Activated naive CD4-positive, alpha-beta T cell treated with anti-CD3 and anti-CD28 coated beads for 36 hours (primary cell): ENCODE measurements at regions of chr3 and their contacts with region 1.

Region 1: GRCh38 chr3:28476194-28476593 is 127.6 kb upstream of the AZI2 start:
- DNase-seq: no peak
- H3K4me3 Mint-ChIP-seq: no peak overlapping the region
- H3K27ac Mint-ChIP-seq: no peak overlapping the region
- H3K4me1 Mint-ChIP-seq: no peaks in the 10 kb centered on the region
- H3K27me3 Mint-ChIP-seq: no peaks in the 10 kb centered on the region

Region 2: DNA sequence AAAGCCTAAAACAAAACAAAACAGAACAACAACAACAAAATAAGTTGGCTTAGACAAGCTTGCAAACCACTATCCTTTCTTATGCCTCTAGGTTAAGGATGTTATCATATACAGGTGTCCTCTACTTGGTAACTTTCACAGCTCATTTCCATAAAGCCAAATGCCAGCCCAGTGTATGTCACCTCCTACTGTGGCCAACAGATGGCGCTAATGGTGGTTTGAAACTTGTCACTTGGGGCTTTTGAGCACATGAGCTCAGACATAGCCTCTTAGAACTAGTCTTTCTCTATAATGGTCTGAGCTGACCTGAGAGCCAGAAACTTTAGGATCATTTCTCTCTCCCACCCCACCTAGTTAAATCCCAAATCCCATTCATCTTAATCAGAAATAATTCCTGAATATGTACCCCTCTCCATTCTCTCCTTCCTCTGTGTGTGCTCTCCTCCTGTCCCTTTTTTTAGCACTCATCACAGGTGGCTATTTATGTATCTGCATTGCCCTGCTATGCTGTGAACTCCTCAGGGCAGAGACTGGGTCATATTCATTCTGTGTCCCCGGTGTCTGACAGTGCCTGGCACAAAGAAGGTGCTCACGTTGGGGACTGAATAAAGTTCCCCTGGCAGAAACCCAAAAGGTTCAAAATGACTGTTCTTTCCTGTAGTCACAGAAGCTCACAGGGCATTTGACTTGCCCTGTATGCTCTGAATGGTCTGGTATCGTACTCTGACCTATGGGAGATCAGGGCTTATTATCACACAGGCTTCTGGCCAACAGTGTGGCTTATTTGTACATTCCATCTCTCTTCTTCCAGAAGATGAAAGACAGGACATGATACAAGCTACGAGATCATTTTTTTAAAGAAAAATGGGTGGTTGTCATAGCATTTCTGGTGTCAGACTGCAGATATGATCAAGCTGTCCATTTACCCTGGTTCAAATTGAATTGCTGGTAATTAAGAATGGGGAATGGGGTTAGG is 191.7 kb after region 1 on chr3:
- CTCF ChIA-PET with region 1: interaction called, 5 read pairs
- intact Hi-C with region 1: loop called (anchors 2 kb)
- DNase-seq: peak; percentile 69
- H3K4me3 Mint-ChIP-seq: no peak overlapping the region
- H3K27ac Mint-ChIP-seq: no peak overlapping the region
- H3K4me1 Mint-ChIP-seq: peaks cover 3% of the 10 kb centered on the region
- H3K27me3 Mint-ChIP-seq: peaks cover 6% of the 10 kb centered on the region

Region 3: GRCh38 chr3:28726840-28727239 is 250.6 kb after region 1 on chr3:
- CTCF ChIA-PET with region 1: no interaction called
- intact Hi-C with region 1: loop called (anchors 2 kb)
- DNase-seq: peak; percentile 15
- H3K4me3 Mint-ChIP-seq: no peak overlapping the region
- H3K27ac Mint-ChIP-seq: no peak overlapping the region
- H3K4me1 Mint-ChIP-seq: no peaks in the 10 kb centered on the region
- H3K27me3 Mint-ChIP-seq: peaks cover 3% of the 10 kb centered on the region

Region 4: DNA sequence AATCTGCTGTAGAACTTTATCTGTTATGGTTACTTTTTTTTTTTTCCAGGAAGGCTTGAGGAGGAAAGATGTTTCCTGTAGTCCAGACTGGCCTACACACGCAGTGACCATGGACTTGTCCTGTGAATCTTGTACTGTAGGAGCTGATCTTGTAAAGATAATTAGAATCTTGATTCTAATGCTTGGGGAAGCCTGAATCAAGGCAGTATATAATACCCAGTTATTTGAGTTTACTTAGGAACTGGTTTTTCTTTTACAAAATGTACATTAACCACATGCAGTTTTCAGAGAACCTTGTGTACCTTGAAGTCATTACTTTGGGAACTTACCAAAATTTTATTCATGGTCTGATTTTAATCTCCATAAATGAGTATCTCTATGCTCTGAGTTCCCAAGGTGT is 312.3 kb after region 1 on chr3:
- CTCF ChIA-PET with region 1: no interaction called
- intact Hi-C with region 1: no loop called
- DNase-seq: no peak
- H3K4me3 Mint-ChIP-seq: no peak overlapping the region
- H3K27ac Mint-ChIP-seq: no peak overlapping the region
- H3K4me1 Mint-ChIP-seq: no peaks in the 10 kb centered on the region
- H3K27me3 Mint-ChIP-seq: no peaks in the 10 kb centered on the region